AG04449 (cell line): ENCODE measurements at regions of chr2 and their contacts with region 1.

Region 1: GRCh38 chr2:239106314-239106908 is 258.5 kb downstream of the TWIST2 start:
- DNase-seq: peak; percentile 7
- H3K4me3 ChIP-seq: no peak overlapping the region
- CTCF ChIP-seq: peak; percentile 89

Region 2: GRCh38 chr2:239035361-239036078 is 70.9 kb before region 1 on chr2:
- CTCF ChIA-PET with region 1: interaction called, 15 read pairs
- POLR2A ChIA-PET with region 1: no interaction called
- DNase-seq: no peak
- H3K4me3 ChIP-seq: no peak overlapping the region
- CTCF ChIP-seq: peak; percentile 91

Region 3: GRCh38 chr2:239093952-239094351 is 12.5 kb before region 1 on chr2:
- CTCF ChIA-PET with region 1: interaction called, 14 read pairs
- POLR2A ChIA-PET with region 1: no interaction called
- DNase-seq: no peak
- H3K4me3 ChIP-seq: no peak overlapping the region
- CTCF ChIP-seq: no peak

Region 4: DNA sequence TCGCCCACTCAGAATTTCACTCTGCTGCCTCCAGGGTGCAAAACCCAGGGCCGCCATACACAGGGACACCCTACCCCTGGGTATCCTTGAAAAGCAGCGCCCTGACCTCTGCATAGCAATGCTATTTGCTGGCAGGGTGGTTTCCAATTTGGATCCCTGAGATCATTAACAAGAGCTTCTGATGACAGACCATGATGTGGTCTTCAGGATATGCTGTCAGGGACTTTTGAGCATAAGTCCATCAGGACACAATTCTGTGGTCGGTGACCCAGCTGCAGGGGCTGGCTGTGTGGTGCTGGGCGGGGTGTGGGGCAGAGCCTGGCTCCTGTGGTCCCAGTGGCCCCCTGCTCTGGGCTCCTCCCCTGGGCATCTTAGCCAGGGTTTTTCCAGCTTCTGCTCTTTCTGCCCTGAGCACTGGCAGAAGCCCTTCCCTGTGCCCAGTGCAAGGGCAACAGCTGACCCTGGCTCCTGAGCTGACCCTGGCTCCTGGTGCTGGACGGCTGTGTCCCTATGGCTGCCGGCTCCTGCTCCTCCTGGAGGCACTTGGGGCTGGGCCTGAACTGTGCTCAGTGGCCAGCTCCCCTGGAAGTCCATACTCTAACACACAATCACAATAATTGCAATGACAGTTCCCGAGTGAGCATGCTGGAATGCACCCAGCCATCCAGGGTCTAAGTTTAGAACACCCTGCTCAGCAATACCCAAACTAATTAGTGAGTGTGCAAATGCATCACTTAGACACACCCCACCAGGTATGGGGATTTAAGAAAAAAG is 22.9 kb after region 1 on chr2:
- CTCF ChIA-PET with region 1: no interaction called
- POLR2A ChIA-PET with region 1: no interaction called
- DNase-seq: no peak
- H3K4me3 ChIP-seq: no peak overlapping the region
- CTCF ChIP-seq: no peak